SK-N-SH (cell line): ENCODE measurements at regions of chr11 and their contacts with region 1.

Region 1: DNA sequence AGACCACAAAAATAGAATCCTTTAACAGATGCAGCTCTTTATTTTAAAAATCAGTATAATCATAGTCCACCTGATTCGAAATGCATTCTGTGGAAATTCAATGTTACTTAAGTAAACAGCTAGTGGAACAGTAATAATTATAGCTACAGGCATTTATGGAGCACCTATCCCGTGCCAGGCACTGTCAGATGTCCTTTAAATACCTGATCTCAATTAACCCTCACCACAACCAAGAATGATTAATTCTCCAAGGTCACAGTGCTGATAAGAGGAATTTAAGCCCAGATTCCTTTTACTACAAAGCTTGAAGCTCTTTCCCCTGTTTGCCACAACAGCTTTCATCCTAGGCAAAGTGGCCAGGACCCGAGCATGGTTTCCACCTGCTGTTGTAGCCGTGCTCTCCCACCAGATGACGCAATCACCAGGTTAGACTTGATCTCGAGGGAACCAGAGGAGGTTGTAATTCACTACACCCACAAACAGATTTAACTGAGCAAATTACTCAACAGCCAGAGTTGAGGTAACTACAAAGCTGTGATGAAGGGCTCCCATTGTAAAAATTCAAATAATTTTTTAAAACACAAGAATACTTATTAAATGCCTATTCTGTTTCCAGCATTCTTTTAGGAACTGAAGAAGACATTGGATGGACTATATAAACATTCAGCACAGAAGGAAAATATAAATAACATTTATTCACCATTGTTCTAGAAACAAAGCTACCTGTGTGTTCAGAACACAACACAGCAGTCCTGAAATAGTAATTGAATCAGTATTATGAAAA is 10.3 kb downstream of the PRDM10 start:
- DNase-seq: peak; percentile 67
- H3K4me3 ChIP-seq: no peak overlapping the region
- H3K27ac ChIP-seq: peak overlapping the region in 1 of 2 experiments; percentile 74; a peak in 2 of 4 replicates
- H3K4me1 ChIP-seq: peaks cover 12% of the 10 kb centered on the region in 2 experiments; a peak in 3 of 4 replicates
- H3K27me3 ChIP-seq: no peaks in the 10 kb centered on the region
- CTCF ChIP-seq: peak; percentile 26; the same call in 1 of the 2 replicates
- EP300 ChIP-seq: no peak
- RAD21 ChIP-seq: peak; percentile 57

Region 2: DNA sequence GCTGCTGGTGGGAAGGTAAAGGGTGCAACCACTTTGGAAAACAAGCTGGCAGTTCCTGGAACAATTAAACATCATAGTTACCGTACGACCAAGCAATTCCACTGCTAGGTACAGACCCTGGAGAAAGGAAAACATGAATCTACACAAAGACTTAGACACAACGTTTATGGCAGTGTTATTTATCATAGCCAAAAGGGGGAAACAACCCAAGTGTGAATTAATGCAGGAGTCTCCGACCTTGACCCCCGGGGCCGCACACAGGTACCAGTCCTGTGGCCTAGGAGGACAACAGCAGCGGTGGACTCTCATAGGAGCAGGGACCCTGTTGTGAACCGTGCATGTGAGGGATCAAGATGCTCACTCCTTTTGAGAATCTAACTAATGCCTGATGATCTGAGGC is 12.3 kb before region 1 on chr11:
- CTCF ChIA-PET with region 1: interaction called, 11 read pairs
- POLR2A ChIA-PET with region 1: no interaction called
- DNase-seq: no peak
- H3K4me3 ChIP-seq: no peak overlapping the region
- H3K27ac ChIP-seq: no peak overlapping the region
- H3K4me1 ChIP-seq: no peaks in the 10 kb centered on the region; a peak in 1 of 4 replicates
- H3K27me3 ChIP-seq: no peaks in the 10 kb centered on the region
- CTCF ChIP-seq: no peak
- EP300 ChIP-seq: no peak
- RAD21 ChIP-seq: no peak

Region 3: DNA sequence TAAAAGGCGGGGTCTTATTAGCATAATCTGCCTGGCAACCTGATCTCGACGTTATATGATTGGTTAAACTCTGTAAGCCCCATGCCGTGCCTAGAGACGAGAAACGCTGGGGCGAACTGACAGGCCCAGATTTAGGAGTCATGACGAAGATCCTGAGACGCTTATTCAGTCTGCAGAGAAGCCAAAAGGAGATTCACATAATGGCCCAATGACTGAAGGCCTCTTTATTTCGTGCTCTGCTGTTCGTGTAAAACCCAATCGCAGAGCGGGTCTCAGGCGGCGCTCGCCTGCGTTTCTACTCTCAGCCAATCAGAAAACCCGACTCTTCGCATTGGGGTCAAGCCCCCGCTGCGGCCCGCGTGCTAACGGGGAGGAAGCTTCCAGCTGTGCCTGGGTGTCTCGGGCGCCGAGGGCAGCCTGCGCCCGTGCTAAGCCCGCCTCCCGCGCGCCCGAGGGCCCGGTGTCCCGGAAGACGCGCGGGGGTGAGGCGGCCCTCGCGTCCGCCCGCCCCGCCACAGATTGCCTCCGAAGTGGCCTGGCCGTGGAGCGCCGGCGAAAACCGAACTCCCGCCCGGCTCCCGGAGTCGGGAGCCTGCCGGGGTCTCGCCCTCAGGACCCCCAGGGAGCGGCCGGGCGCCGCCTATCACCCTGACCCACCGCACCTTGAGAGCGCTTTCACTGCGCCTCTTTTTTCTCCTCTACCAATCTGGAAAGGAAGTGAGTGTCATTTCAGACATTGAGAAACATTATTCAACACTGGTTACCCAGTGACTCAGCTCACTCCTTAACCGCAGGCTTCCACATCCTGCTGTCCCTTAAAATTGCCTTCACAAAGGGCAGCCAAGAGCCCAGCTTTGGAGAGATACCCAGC is 10.7 kb after region 1 on chr11:
- CTCF ChIA-PET with region 1: interaction called, 5 read pairs
- POLR2A ChIA-PET with region 1: interaction called, 10 read pairs
- DNase-seq: peak; percentile 98
- H3K4me3 ChIP-seq: peak overlapping the region; percentile 69 to 83
- H3K27ac ChIP-seq: peak overlapping the region; percentile 99 to 100
- H3K4me1 ChIP-seq: peaks cover 0 to 3% of the 10 kb centered on the region in 2 experiments; a peak in 3 of 4 replicates
- H3K27me3 ChIP-seq: no peaks in the 10 kb centered on the region
- CTCF ChIP-seq: no peak
- EP300 ChIP-seq: peak; percentile 39 to 90; a peak in 1 of 4 replicates
- RAD21 ChIP-seq: no peak